ENCODE measurements at regions of chr11 and their contacts with region 1.

Region 1: GRCh38 chr11:66408488-66409214 is 12.2 kb upstream of the NPAS4 start:
- DNase-seq: peak; percentile 93
- H3K4me3 Mint-ChIP-seq: peak overlapping the region; percentile 47
- H3K27ac Mint-ChIP-seq: no peak overlapping the region
- H3K4me1 Mint-ChIP-seq: no peaks in the 10 kb centered on the region
- H3K27me3 Mint-ChIP-seq: peaks cover 97% of the 10 kb centered on the region
- CTCF ChIP-seq: peak; percentile 99

Region 2: GRCh38 chr11:66429983-66430602 is 21.4 kb after region 1 on chr11:
- CTCF ChIA-PET with region 1: no interaction called
- intact Hi-C with region 1: loop called (anchors 1 kb)
- DNase-seq: peak; percentile 79
- H3K4me3 Mint-ChIP-seq: no peak overlapping the region
- H3K27ac Mint-ChIP-seq: no peak overlapping the region
- H3K4me1 Mint-ChIP-seq: no peaks in the 10 kb centered on the region
- H3K27me3 Mint-ChIP-seq: peaks cover 11% of the 10 kb centered on the region
- CTCF ChIP-seq: peak; percentile 89

Region 3: DNA sequence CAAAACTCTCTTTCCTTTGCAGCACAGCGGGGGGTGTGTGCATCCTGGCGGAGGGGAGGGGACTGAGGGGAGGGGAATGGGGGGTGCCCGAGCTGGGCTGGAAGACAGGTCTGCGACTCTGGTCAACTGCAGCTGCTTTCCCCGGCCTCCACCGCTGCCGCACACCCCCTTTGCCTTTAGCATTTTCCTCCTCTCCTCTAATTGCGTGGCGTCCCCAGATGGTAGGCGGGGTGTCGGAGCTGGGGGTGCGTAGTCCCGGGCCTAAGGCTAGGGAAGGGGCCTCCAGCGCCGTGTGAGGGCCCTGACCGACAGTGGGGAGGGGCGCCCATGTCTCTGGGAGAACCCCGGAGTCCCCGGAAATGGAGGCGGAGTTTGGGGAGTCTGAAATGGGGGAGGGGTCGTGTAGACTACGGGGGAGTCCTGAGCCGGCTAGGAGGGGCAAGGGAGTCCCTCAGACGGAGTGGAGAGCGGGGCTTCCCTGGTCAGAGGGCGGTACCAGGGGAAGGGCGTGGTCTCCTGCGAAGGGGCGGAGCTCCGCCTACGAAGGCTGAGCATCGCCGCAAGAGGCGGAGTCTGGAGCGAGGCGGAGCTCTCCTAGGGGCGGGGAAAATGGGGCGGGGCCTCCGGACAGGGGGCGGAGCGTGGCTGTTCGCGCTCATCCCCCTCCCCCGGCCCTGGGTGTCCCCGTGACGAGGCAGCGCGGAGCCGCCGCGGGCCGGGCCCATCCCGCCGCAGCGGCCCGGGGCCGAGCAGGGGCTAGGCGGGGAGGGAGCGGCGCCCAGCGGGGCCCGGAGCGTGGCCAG is 57.8 kb after region 1 on chr11 and contains the start of gene PELI3:
- CTCF ChIA-PET with region 1: no interaction called
- intact Hi-C with region 1: no loop called
- DNase-seq: peak; percentile 92
- H3K4me3 Mint-ChIP-seq: peak within 1 kb of the TSS; percentile 86
- H3K27ac Mint-ChIP-seq: peak within 1 kb of the TSS; percentile 81
- H3K4me1 Mint-ChIP-seq: peaks cover 8% of the 10 kb centered on the region
- H3K27me3 Mint-ChIP-seq: no peaks in the 10 kb centered on the region
- CTCF ChIP-seq: no peak
- total RNA-seq, gene PELI3: 7.6 and 8.1 TPM in 2 replicates